ENCODE measurements at regions of chr21 and their contacts with region 1.

Region 1: DNA sequence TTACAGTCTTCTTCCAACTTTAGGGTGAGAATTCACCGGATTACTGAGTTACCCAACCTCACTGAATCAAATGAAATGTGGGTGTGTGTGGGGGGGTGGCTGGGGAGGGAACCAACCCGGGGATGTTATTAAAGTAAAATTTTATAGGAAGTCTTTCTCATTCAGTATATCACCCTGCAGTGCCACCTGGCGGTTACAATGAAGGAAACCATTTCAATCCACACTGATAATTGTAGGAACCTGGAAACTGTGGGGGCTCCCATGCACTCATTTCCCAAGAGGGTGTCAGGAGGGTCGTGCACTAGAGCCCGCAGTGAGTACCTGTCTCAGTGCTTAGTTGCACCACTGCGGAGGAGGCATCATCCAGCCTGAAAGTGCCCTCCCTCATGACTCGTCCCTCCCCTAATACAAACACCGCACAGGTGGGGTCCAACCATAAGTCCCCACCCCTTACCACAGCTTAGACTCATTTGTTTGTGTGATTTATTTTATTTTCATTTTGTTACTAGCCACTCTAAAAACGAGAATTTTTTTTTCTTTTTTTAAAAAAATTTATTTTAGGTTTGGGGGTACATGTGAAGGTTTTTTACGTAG is 29.1 kb upstream of the IGSF5 start:
- DNase-seq: peak; percentile 51 to 76
- ATAC-seq: peak; percentile 56

Region 2: GRCh38 chr21:39518138-39518846 is 197.6 kb before region 1 on chr21:
- intact Hi-C with region 1: loop called (anchors 2 to 10 kb)
- DNase-seq: peak in 1 of 2 donors; percentile 44
- ATAC-seq: peak; percentile 83

Region 3: DNA sequence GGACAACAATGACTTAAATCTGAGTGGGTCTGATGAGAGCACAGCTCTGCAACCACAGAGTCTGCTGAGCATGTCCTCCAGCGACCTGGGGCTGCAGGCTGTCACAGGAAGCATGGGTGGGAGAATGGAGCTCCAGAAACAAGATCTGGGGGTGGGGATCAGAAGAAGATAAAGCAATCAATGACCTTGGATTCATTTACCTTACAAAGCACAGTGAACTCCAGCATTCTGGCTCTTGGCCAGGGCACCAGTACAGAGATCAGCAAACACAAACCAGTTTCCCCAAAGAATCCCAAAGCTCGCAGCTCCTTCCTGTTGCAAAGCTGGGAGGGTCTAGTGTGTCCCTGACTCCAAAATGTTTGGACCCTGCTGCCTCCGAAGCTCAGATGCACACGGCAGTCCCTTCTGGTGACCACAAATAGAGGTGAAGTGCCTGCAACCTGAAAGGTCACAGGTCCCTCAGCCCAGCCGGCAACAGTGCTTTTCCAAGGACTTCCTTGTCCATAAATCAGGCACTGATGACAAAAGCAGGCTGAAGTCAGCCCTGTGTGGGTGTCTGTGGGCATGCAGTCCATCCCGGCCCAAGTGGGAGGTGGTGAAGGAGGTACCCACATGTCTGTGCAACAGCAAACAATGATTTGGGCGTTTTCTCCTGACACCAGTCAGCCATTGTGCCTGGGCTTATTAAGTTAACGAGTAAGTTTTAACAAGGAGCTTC is 188.1 kb before region 1 on chr21:
- intact Hi-C with region 1: loop called in 1 of 2 experiments (anchors 10 kb)
- DNase-seq: peak; percentile 81 to 83
- ATAC-seq: peak; percentile 81

Region 4: GRCh38 chr21:41045534-41046268 is 1329.8 kb after region 1 on chr21:
- intact Hi-C with region 1: no loop called
- DNase-seq: peak in 1 of 2 donors; percentile 16
- ATAC-seq: peak; percentile 42

Measured in left colon (tissue), 2 donors.